Activated CD8-positive, alpha-beta T cell treated with anti-CD3 and anti-CD28 coated beads, Interleukin-2, amount 10 ng/mL, durations not matched to agents 7 days and 5 days (primary cell): ENCODE measurements at regions of chr19 and their contacts with region 1.

Region 1: GRCh38 chr19:2475702-2476450 is at the start of gene GADD45B:
- DNase-seq: peak; percentile 98
- ATAC-seq: peak; percentile 52
- H3K4me3 Mint-ChIP-seq: peak within 1 kb of the TSS; percentile 86
- H3K27ac Mint-ChIP-seq: peak within 1 kb of the TSS; percentile 95
- H3K4me1 Mint-ChIP-seq: peaks cover 23% of the 10 kb centered on the region
- H3K27me3 Mint-ChIP-seq: peaks cover 2% of the 10 kb centered on the region
- total RNA-seq, gene GADD45B: 59.2 to 61.4 TPM

Region 2: DNA sequence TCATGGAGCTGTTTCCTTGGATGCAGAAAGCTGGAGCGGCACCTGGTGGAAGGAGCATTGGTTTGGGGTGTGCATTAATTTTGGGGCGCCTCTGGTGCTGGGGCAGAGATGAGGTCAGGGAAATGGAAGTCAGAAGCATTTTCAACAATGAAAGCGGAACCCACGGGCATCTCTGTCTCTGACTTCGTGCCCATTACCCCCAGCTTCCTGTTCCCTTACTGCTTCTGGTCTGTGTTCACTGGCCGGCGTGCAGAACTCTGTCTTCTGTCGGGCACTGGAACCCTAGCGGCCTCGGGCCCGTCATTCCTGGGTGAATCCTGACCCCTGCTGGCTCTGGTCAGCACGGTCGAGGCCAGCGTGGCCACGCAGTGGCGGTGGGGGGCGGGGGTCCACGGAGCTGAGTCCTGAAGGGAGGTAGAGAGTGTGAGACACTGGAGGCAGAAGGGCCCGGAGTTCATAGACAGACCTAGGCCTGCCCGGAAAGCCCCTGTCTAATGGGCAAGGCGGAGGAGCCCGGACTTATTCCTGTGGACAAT is 160.0 kb before region 1 on chr19:
- CTCF ChIA-PET with region 1: no interaction called
- POLR2A ChIA-PET with region 1: no interaction called
- DNase-seq: peak; percentile 37
- ATAC-seq: no peak
- H3K4me3 Mint-ChIP-seq: no peak overlapping the region
- H3K27ac Mint-ChIP-seq: no peak overlapping the region
- H3K4me1 Mint-ChIP-seq: no peaks in the 10 kb centered on the region
- H3K27me3 Mint-ChIP-seq: peaks cover 13% of the 10 kb centered on the region

Region 3: DNA sequence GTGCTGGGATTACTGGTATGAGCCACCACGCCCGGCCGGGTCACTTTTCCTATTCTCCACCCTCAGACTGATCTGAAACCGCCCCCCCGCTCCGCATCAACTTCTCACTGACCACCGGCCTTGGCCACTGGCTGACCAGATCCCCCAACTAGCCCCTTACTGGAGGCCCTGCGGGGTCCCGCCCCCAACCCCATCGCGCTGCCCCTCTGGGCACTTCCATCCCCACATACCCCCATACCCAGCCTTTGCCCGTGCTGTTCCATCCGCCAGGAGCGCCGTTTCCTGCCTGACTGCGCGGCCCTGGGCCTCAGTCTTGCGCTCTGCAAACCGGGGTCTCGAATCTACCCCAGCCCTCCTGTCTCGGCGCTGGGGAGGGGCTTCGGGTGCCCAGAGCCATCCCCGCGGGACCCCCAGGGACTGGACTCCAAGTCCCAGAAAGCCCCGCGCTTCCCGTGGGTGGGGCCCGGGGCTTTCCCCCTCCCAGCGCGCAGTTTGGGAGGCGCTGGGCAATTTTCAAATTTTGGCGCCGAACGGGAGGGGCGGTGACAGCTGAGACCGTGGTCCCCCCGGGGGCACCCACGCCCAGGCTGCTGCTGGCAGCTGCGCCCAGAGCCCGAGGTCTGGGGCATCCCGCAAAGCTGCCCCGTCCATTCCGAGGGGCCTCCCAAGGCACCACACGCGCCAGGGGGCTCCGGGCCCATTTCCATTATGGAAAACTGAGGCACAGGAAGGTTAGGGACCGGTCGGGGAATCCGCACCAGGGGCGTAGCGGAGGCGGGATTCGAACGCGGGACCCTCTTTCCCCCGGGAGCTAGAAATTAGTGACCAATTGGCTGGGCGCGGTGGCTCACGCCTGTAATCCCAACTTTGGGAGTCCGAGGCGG is 13.9 kb before region 1 on chr19:
- CTCF ChIA-PET with region 1: interaction called, 8 read pairs
- POLR2A ChIA-PET with region 1: interaction called, 46 read pairs
- DNase-seq: peak; percentile 83
- ATAC-seq: peak; percentile 81
- H3K4me3 Mint-ChIP-seq: peak overlapping the region; percentile 91
- H3K27ac Mint-ChIP-seq: peak overlapping the region; percentile 91
- H3K4me1 Mint-ChIP-seq: peaks cover 22% of the 10 kb centered on the region
- H3K27me3 Mint-ChIP-seq: no peaks in the 10 kb centered on the region

Region 4: DNA sequence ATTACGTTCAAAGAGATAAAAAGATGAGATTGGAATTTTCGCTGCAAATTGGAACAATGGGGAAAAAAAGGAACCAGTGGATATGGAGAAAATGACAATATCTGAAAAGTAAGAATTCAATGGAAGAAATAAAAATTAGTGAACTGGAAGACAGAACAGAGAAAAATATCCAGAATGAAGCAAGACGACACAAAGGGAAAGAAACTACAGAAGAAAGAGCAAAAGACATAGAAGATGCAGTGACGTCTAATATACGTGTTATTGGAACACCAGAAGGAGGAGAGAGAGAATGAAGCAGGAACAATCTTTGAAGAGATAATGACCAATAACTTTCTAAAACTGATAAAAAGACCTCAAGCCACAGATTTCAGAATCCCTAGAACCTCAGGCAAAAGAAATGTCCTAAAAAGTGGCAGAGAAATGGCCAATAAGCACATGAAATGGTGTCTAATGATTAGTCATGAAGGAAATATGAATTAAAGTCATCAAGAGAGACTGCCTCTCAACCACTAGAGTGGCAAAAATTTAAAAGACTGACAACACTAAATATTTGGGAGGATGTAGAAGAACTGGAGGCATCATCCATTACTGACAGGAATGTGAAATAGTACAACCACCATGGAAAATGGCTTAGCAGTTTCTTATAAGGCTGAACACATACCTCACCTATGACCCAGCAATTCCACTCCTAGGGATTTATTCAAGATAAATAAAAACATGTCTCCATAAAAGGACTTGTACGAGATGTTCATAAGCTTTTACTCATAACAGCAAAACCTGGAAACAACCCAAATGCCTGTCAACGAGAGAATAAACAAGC is 56.6 kb after region 1 on chr19:
- CTCF ChIA-PET with region 1: interaction called, 3 read pairs
- POLR2A ChIA-PET with region 1: interaction called, 28 read pairs
- DNase-seq: no peak
- ATAC-seq: no peak
- H3K4me3 Mint-ChIP-seq: no peak overlapping the region
- H3K27ac Mint-ChIP-seq: no peak overlapping the region
- H3K4me1 Mint-ChIP-seq: peaks cover 26% of the 10 kb centered on the region
- H3K27me3 Mint-ChIP-seq: no peaks in the 10 kb centered on the region

Region 5: GRCh38 chr19:2561895-2562294 is 86.0 kb after region 1 on chr19:
- CTCF ChIA-PET with region 1: interaction called, 9 read pairs
- POLR2A ChIA-PET with region 1: interaction called, 58 read pairs
- DNase-seq: peak; percentile 85
- ATAC-seq: peak; percentile 92
- H3K4me3 Mint-ChIP-seq: peak overlapping the region; percentile 86
- H3K27ac Mint-ChIP-seq: peak overlapping the region; percentile 99
- H3K4me1 Mint-ChIP-seq: peaks cover 68% of the 10 kb centered on the region
- H3K27me3 Mint-ChIP-seq: no peaks in the 10 kb centered on the region

Region 6: GRCh38 chr19:2610637-2611482 is 135.0 kb after region 1 on chr19:
- CTCF ChIA-PET with region 1: interaction called, 162 read pairs
- POLR2A ChIA-PET with region 1: interaction called, 143 read pairs
- DNase-seq: peak; percentile 92
- ATAC-seq: peak; percentile 89
- H3K4me3 Mint-ChIP-seq: peak overlapping the region; percentile 81
- H3K27ac Mint-ChIP-seq: peak overlapping the region; percentile 76
- H3K4me1 Mint-ChIP-seq: peaks cover 55% of the 10 kb centered on the region
- H3K27me3 Mint-ChIP-seq: peaks cover 2% of the 10 kb centered on the region